ENCODE measurements at regions of chr16 and their contacts with region 1.

Region 1: DNA sequence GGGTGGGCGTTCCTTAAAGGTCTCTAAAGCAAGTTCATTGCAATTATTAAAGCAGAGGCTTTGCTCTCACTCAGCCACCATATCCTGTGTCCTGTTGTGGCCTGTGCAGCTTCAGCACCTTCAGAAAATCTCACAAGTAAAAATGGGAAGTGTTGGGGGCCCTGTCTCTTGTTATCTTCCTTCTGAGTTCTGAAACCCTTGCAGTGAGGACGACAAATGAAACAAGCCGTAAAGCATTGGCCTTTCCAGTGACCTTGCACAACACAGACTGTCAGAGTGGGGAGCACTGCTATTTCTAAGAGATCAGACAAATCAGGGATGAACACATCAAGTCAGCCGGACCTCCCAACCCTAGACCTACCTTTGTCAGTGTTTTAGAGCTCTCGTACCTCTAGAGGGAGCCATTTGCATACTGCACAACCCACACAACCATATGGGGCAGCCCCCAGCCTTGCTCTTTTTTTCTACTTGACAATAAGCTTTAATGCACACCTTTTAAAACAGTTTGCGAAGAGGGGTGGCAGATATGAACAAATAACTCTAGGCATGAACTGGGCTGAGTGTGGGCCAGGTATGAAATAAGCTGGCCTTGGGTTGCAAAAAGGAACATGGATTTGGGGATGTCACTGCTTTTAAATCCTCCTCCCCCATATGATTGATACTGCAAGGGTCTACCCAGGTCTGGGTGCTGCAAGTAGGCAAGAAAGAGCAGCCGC is 89.8 kb downstream of the KATNIP start:
- DNase-seq: peak; percentile 40
- ATAC-seq: peak; percentile 87
- H3K4me3 Mint-ChIP-seq: no peak overlapping the region
- H3K27ac Mint-ChIP-seq: no peak overlapping the region
- H3K4me1 Mint-ChIP-seq: peaks cover 25% of the 10 kb centered on the region
- H3K27me3 Mint-ChIP-seq: no peaks in the 10 kb centered on the region
- CTCF ChIP-seq: peak; percentile 46

Region 2: GRCh38 chr16:27628241-27628942 is 11.3 kb before region 1 on chr16:
- CTCF ChIA-PET with region 1: interaction called, 29 read pairs
- POLR2A ChIA-PET with region 1: no interaction called
- DNase-seq: peak; percentile 20
- ATAC-seq: peak; percentile 57
- H3K4me3 Mint-ChIP-seq: no peak overlapping the region
- H3K27ac Mint-ChIP-seq: no peak overlapping the region
- H3K4me1 Mint-ChIP-seq: no peaks in the 10 kb centered on the region
- H3K27me3 Mint-ChIP-seq: peaks cover 11% of the 10 kb centered on the region
- CTCF ChIP-seq: no peak

Region 3: DNA sequence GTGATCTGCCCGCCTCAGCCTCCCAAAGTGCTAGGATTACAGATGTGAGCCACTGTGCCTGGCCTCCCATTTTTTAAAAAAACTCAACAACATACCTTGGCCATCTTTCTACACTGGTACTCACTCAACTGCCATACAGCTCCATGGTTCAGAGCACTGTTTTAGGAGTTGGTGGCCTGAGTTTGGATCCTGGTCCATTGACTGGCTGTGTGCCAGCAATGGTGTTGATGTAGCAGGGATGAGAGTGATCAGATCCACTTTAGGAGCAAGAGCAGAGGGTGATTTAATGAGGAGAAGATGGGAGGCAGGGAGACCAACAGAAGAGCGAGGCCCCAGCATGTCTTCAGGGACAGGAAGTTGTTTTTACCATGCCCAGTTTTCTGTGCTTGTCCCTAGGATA is 14.5 kb after region 1 on chr16:
- CTCF ChIA-PET with region 1: interaction called, 12 read pairs
- POLR2A ChIA-PET with region 1: no interaction called
- DNase-seq: no peak
- ATAC-seq: no peak
- H3K4me3 Mint-ChIP-seq: no peak overlapping the region
- H3K27ac Mint-ChIP-seq: no peak overlapping the region
- H3K4me1 Mint-ChIP-seq: peaks cover 12% of the 10 kb centered on the region; the same call in 1 of the 2 replicates
- H3K27me3 Mint-ChIP-seq: no peaks in the 10 kb centered on the region
- CTCF ChIP-seq: no peak

Region 4: GRCh38 chr16:27698266-27698665 is 58.5 kb after region 1 on chr16:
- CTCF ChIA-PET with region 1: interaction called, 27 read pairs
- POLR2A ChIA-PET with region 1: no interaction called
- DNase-seq: peak; percentile 94
- ATAC-seq: peak; percentile 94
- H3K4me3 Mint-ChIP-seq: no peak overlapping the region
- H3K27ac Mint-ChIP-seq: no peak overlapping the region
- H3K4me1 Mint-ChIP-seq: peaks cover 21% of the 10 kb centered on the region
- H3K27me3 Mint-ChIP-seq: no peaks in the 10 kb centered on the region
- CTCF ChIP-seq: peak; percentile 61